Naive thymus-derived CD4-positive, alpha-beta T cell (primary cell): ENCODE measurements at regions of chr2 and their contacts with region 1.

Region 1: GRCh38 chr2:39124000-39124745 is 3.3 kb upstream of the SOS1 start:
- DNase-seq: peak; percentile 89 to 97 (median 93)
- ATAC-seq: peak; percentile 89
- H3K4me3 ChIP-seq: peak overlapping the region; percentile 98
- H3K4me3 Mint-ChIP-seq: peak overlapping the region; percentile 88 to 99 (median 92)
- H3K27ac ChIP-seq: peak overlapping the region; percentile 92
- H3K27ac Mint-ChIP-seq: peak overlapping the region; percentile 92 to 99 (median 95)
- H3K4me1 ChIP-seq: peaks cover 38% of the 10 kb centered on the region in 2 donors
- H3K4me1 Mint-ChIP-seq: peaks cover 12 to 68% (median 62%) of the 10 kb centered on the region in 7 donors
- H3K27me3 ChIP-seq: no peaks in the 10 kb centered on the region
- H3K27me3 Mint-ChIP-seq: no peaks in the 10 kb centered on the region

Region 2: DNA sequence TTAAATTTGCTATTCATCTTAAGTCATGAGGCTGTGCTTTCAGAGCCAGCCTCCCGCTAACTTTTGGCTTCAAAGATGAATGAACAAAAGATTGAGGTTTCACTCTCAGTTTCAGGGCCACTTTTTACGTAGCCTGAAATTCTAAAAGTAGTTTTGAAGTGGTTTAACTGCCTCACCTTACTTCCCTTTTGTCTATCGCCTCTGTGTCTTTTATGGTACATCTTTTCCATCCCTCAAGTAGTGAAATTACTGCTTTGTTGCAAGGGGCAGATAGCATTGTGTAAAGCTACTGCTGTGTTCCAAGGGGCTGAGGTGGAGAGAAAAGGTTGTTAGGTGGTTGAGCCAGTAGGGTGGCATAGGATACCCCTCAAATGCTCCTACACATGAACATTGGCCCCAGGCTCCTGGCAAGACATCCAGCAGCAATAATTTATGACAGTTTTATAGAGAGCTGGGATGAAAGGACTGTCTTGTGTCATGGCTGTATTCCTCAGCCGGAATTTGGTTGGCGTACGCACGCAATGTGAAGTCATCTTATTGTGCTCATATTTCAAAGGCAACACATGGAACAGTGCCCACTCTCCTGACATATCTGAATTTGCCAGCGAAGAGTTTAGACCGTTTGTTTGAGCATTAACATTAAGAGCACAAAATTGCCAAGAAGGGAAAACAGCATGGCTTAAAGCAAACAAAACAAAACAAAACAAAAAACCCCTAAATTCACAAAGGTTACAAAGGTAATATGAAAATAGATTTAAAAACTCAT is 1747.6 kb before region 1 on chr2:
- CTCF ChIA-PET with region 1: no interaction called
- POLR2A ChIA-PET with region 1: no interaction called
- intact Hi-C with region 1: loop called in 1 of 2 experiments (anchors 10 kb)
- DNase-seq: peak in 8 of 9 donors; percentile 27 to 69 (median 56)
- ATAC-seq: peak; percentile 86
- H3K4me3 ChIP-seq: no peak overlapping the region
- H3K4me3 Mint-ChIP-seq: peak overlapping the region in 9 of 10 donors; percentile 33 to 80 (median 63)
- H3K27ac ChIP-seq: no peak overlapping the region
- H3K27ac Mint-ChIP-seq: peak overlapping the region in 4 of 9 donors; percentile 16 to 65 (median 35)
- H3K4me1 ChIP-seq: peaks cover 13 to 17% of the 10 kb centered on the region in 2 donors
- H3K4me1 Mint-ChIP-seq: peaks cover 11 to 30% (median 17%) of the 10 kb centered on the region in 7 donors
- H3K27me3 ChIP-seq: peaks cover 0 to 6% of the 10 kb centered on the region in 2 donors
- H3K27me3 Mint-ChIP-seq: peaks cover 25 to 66% (median 53%) of the 10 kb centered on the region in 5 donors

Region 3: DNA sequence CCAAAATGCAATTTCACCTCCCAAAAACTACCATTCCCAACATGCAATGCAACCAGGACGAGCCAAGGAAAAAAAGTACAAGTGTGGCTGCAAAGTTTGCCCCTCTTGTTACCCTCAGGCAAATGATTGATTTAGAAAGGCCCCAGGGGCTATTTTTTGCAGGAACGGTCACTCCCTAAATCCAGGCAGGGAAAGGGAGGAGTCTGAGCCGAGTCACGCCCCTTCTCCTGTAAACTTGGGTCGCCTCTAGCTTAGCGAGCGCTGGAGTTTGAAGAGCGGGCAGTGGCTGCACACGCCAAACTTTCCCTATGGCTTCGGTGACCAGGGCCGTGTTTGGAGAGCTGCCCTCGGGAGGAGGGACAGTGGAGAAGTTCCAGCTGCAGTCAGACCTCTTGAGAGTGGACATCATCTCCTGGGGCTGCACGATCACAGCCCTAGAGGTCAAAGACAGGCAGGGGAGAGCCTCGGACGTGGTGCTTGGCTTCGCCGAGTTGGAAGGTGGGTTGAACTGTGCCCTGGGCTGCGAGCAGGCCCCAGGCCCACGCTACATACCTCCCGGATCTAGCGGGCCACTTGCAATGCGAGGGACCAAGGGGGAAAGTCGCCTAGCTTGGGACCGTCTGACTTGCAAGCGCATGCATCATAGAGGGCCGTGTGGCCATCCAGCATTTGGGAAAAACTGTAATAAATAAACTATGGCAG is 458.2 kb before region 1 on chr2 and contains the start of gene GALM:
- CTCF ChIA-PET with region 1: no interaction called
- POLR2A ChIA-PET with region 1: interaction called, 4 read pairs
- intact Hi-C with region 1: loop called (anchors 5 kb)
- DNase-seq: peak; percentile 8 to 57 (median 47)
- ATAC-seq: peak; percentile 39
- H3K4me3 ChIP-seq: peak within 1 kb of the TSS; percentile 76
- H3K4me3 Mint-ChIP-seq: peak within 1 kb of the TSS; percentile 85 to 97 (median 90)
- H3K27ac ChIP-seq: peak within 1 kb of the TSS; percentile 75
- H3K27ac Mint-ChIP-seq: peak within 1 kb of the TSS; percentile 82 to 96 (median 92)
- H3K4me1 ChIP-seq: peaks cover 9 to 43% of the 10 kb centered on the region in 2 donors
- H3K4me1 Mint-ChIP-seq: peaks cover 30 to 72% (median 53%) of the 10 kb centered on the region in 7 donors
- H3K27me3 ChIP-seq: no peaks in the 10 kb centered on the region
- H3K27me3 Mint-ChIP-seq: no peaks in the 10 kb centered on the region
- total RNA-seq, gene GALM: 4.3 to 52.5 (median 14.4) TPM

Region 4: DNA sequence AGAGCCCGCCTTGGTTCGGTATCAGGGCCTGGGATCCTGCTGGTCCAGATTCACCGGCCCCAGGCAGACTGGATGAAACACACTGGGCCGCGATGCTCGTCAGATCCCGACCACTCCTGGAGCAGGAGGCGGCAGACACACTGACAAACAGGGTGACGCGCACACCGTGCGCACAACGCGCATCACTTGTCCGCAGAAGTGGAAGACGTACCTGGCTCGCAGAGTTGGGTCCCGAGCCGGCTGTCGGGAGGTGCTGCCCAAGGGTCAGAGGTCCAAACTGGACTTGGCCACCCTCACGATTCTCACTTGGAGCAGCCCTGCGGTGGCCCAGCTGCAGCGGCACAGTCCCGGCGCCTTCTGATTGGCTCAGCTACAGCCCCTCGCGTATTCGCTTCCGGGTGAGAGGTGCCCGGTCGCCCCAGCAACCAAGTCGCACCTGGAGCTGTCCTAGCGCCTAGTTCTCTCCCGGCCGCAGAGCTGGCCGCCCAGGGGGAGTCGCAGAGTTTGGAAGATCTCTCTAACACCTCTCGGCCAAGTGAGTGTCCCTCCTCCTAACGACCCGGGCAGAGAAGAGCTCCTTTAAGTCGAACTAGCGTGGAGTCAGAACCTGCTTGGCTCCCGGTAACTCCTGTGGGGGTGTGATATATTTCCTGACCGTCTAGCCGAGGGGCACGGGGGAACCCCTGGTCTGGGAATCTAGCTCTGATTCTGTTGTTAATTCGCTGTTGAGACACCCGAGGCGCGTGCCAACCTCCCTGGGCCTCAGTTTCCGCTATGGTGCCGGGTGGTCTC is 248.4 kb before region 1 on chr2 and contains the starts of genes DHX57 and MORN2:
- CTCF ChIA-PET with region 1: no interaction called
- POLR2A ChIA-PET with region 1: no interaction called
- intact Hi-C with region 1: loop called (anchors 2 to 10 kb)
- DNase-seq: peak; percentile 64 to 83 (median 79)
- ATAC-seq: peak; percentile 98
- H3K4me3 ChIP-seq: peak within 1 kb of the TSS; percentile 91
- H3K4me3 Mint-ChIP-seq: peak within 1 kb of the TSS; percentile 94 to 100 (median 96)
- H3K27ac ChIP-seq: peak within 1 kb of the TSS; percentile 69
- H3K27ac Mint-ChIP-seq: peak within 1 kb of the TSS; percentile 82 to 99 (median 95)
- H3K4me1 ChIP-seq: peaks cover 11 to 14% of the 10 kb centered on the region in 2 donors
- H3K4me1 Mint-ChIP-seq: peaks cover 13 to 48% (median 32%) of the 10 kb centered on the region in 7 donors
- H3K27me3 ChIP-seq: no peaks in the 10 kb centered on the region
- H3K27me3 Mint-ChIP-seq: no peaks in the 10 kb centered on the region
- total RNA-seq, gene DHX57: 12.9 to 19.8 (median 18.9) TPM
- total RNA-seq, gene MORN2: 1.5 to 2.7 (median 2.1) TPM

Region 5: DNA sequence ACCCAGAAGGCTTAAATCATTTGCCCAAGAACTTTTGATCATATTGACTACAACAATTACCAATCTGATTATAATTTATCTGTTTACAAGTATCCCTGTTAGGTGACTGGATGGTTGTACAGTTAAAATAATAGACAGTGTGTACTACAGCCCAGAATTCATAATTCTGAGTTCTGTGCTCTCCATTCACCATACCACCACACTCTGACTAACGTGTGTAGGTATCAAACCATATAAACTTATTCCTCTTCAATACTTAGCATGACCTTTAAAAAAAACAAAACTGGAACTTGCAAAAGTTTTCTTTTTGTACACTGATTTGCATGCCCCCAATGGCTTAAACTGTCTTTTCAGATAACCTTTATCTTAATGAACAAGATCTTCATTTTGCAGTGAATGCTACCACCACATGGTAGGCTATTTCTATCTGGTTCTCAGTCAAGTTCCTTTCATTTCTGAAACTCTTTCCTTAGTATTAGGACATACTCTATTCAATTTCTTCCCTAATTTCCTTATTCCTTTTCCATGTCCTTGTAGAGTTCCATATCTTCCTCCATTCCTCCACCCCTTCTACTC is 54.2 kb before region 1 on chr2:
- CTCF ChIA-PET with region 1: interaction called, 3 read pairs
- POLR2A ChIA-PET with region 1: no interaction called
- intact Hi-C with region 1: loop called in 1 of 2 experiments (anchors 5 kb)
- DNase-seq: no peak
- ATAC-seq: no peak
- H3K4me3 ChIP-seq: no peak overlapping the region
- H3K4me3 Mint-ChIP-seq: peak overlapping the region in 1 of 10 donors; percentile 2
- H3K27ac ChIP-seq: no peak overlapping the region
- H3K27ac Mint-ChIP-seq: peak overlapping the region in 8 of 9 donors; percentile 0 to 56 (median 24)
- H3K4me1 ChIP-seq: no peaks in the 10 kb centered on the region
- H3K4me1 Mint-ChIP-seq: peaks cover 13 to 52% (median 27%) of the 10 kb centered on the region in 7 donors
- H3K27me3 ChIP-seq: no peaks in the 10 kb centered on the region
- H3K27me3 Mint-ChIP-seq: no peaks in the 10 kb centered on the region

Region 6: GRCh38 chr2:39141331-39142271 is 17.4 kb after region 1 on chr2:
- CTCF ChIA-PET with region 1: no interaction called
- POLR2A ChIA-PET with region 1: interaction called, 34 read pairs
- intact Hi-C with region 1: loop called (anchors 1 kb)
- DNase-seq: no peak
- ATAC-seq: no peak
- H3K4me3 ChIP-seq: no peak overlapping the region
- H3K4me3 Mint-ChIP-seq: peak overlapping the region in 1 of 10 donors; percentile 69
- H3K27ac ChIP-seq: no peak overlapping the region
- H3K27ac Mint-ChIP-seq: peak overlapping the region in 1 of 9 donors; percentile 86
- H3K4me1 ChIP-seq: peaks cover 7 to 9% of the 10 kb centered on the region in 2 donors
- H3K4me1 Mint-ChIP-seq: peaks cover 0 to 65% (median 16%) of the 10 kb centered on the region in 7 donors
- H3K27me3 ChIP-seq: no peaks in the 10 kb centered on the region
- H3K27me3 Mint-ChIP-seq: no peaks in the 10 kb centered on the region

Region 7: GRCh38 chr2:39436592-39437510 is 312.7 kb after region 1 on chr2 and contains the start of gene MAP4K3:
- CTCF ChIA-PET with region 1: no interaction called
- POLR2A ChIA-PET with region 1: interaction called, 4 read pairs
- intact Hi-C with region 1: loop called (anchors 2 to 5 kb)
- DNase-seq: peak; percentile 46 to 84 (median 54)
- ATAC-seq: peak; percentile 79
- H3K4me3 ChIP-seq: peak within 1 kb of the TSS; percentile 76
- H3K4me3 Mint-ChIP-seq: peak within 1 kb of the TSS; percentile 67 to 97 (median 91)
- H3K27ac ChIP-seq: peak within 1 kb of the TSS; percentile 64
- H3K27ac Mint-ChIP-seq: peak within 1 kb of the TSS; percentile 47 to 96 (median 87)
- H3K4me1 ChIP-seq: peaks cover 9 to 30% of the 10 kb centered on the region in 2 donors
- H3K4me1 Mint-ChIP-seq: peaks cover 35 to 57% (median 54%) of the 10 kb centered on the region in 7 donors
- H3K27me3 ChIP-seq: no peaks in the 10 kb centered on the region
- H3K27me3 Mint-ChIP-seq: no peaks in the 10 kb centered on the region
- total RNA-seq, gene MAP4K3: 14.4 to 32.2 (median 19.9) TPM